Sciatic nerve (tissue), 2 donors: ENCODE measurements at regions of chr4 and their contacts with region 1.

Region 1: GRCh38 chr4:107853444-107854355 is 29.0 kb downstream of the SGMS2 start:
- DNase-seq: no peak
- ATAC-seq: peak; percentile 73

Region 2: DNA sequence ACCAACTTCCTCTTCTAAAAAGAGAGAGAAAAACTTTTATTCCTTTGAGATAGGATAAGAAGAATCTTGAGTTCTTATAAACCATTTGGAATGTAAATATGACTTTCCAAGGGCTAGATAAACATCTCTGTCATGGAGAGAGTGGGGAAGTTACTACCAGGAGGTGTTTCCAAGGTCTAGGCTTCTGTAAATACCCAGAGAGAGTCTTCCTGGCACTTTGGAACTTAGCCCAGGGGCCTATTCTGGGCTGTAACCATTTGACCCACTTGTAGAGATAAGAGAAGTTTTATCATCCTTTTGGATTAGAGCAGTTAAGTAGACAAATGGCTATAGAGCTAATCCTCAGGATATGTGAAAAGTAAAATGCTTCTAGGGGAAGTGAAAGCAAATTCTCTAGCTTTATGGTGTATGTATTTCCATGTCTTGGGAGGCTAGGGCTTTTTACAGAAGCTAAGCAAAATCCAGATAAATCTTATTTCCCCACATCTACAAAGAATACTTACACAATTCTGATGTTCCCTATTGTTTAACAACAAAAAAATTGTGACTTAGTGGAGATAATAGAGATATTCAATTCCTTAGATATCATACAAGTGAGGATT is 1757.4 kb after region 1 on chr4:
- intact Hi-C with region 1: loop called (anchors 5 kb)
- DNase-seq: no peak
- ATAC-seq: no peak